ENCODE measurements at regions of chr3 and their contacts with region 1.

Region 1: GRCh38 chr3:12663936-12664908 is at the start of gene RAF1:
- DNase-seq: peak; percentile 99
- ATAC-seq: peak; percentile 96
- total RNA-seq, gene RAF1: 142 TPM

Region 2: DNA sequence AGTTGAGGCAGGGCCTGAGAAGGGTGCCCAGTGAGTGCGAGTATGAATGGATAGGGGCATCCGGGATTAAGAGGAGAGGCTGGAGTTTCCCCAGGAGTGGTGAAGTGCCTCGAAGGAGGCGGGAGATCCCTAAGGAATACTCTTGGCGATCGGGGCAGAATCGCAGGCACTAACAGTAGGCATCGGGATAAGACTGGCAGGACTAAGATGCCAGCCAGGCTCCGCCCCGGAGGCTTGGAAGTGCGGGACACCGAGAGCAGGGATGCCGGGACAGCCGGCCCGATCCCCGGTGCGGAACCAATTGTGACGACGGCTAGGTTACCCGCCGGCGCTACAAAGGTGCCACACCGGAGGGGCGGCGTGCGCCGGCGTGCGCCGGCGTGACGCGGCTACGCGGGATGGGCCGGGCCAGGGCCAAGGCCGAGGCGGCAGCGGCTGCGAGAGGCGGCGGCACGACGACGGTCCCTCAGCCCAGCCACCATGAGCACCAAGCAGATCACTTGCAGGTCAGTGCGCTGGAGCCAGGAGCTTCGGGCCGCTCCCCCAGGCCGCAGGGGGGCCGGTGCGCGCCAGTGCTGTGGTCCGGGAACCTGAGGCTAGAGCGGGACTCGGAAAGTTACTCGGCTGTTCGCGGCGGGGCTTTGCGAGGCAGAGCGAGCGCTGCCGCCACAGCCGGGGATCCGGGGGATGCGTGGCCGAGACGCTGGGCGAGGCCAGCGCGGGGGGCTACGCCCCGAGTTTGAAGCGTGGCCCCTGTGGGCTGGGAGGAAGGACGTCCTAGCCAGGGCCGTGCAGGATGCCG is 107.3 kb before region 1 on chr3 and contains the start of gene MKRN2:
- intact Hi-C with region 1: loop called (anchors 5 kb)
- DNase-seq: peak; percentile 93
- ATAC-seq: peak; percentile 97
- total RNA-seq, gene MKRN2: 27.7 TPM

Region 3: GRCh38 chr3:12613250-12613649 is 51.0 kb before region 1 on chr3:
- intact Hi-C with region 1: no loop called
- DNase-seq: no peak
- ATAC-seq: no peak

Region 4: DNA sequence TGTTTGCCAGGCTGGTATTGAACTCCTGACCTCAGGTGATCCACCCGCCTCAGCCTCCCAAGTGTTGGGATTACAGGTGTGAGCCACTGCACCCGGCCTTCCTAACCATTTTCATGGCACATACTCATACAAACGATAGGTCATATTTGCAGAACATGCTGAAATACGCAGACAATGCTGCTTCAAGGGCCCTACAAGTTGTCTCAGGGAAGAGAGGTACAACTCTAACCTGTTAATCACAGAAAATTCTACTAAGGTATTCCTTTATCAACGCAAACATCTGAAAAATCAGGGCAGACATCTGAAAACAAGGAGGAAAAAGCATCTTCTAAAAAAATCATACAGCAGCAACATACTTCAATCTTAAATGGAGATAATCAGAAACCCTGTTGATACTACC is 40.2 kb before region 1 on chr3:
- intact Hi-C with region 1: loop called (anchors 2 kb)
- DNase-seq: no peak
- ATAC-seq: no peak